ENCODE measurements at regions of chr15 and their contacts with region 1.

Region 1: DNA sequence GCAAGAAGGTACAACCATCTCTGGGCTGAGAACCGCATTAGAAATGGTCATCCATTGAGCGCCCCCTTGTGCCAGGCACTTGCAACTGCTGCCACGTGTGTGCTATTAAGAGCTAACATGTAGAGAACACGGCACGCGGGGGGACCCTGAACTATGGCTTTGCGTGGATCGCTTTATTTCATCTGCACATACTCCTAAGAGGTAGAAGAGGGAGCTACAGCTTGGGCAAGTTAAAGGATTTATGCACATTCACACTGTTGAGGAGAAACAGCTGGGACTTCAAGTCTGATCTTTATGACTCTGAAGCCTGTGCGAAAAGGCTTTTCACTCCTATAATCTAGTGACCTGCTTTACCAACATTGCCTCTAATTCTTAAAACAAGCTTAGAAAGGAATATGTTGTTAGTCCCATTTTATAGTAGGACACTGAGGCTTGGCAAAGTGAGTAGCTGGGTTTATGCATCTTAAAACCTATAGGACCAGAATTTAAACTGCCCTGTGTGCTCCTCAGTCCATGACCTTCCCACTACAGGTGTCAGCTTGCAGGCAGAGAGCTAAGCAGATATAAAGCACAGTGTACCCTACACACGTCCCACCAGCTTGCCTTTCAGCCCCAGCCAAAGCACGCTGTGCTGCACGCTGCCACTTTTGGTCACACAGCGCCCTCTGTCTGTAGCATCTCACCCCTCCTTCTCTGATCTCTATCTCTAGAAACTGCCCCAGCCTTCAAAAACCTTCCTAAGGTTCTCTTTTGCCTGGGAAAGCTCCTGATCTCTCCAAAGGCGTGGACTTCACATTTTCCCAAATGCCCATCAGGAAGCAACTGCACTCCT is 57.8 kb downstream of the STARD5 start:
- DNase-seq: peak; percentile 86
- H3K4me3 ChIP-seq: peak overlapping the region in 1 of 4 donors; percentile 6
- H3K27ac ChIP-seq: no peak overlapping the region
- H3K4me1 ChIP-seq: peaks cover 4 to 11% (median 7%) of the 10 kb centered on the region in 4 donors
- H3K27me3 ChIP-seq: peaks cover 5% of the 10 kb centered on the region
- CTCF ChIP-seq: peak; percentile 76 to 94 (median 86)
- EP300 ChIP-seq: no peak
- POLR2A ChIP-seq: no peak

Region 2: GRCh38 chr15:80970018-80970658 is 296.0 kb before region 1 on chr15:
- in situ Hi-C with region 1: loop called in 3 of 4 experiments (anchors 10 to 25 kb)
- intact Hi-C with region 1: loop called (anchors 5 kb)
- DNase-seq: peak; percentile 58
- H3K4me3 ChIP-seq: no peak overlapping the region
- H3K27ac ChIP-seq: no peak overlapping the region
- H3K4me1 ChIP-seq: no peaks in the 10 kb centered on the region
- H3K27me3 ChIP-seq: no peaks in the 10 kb centered on the region
- CTCF ChIP-seq: peak; percentile 83 to 92 (median 87)
- EP300 ChIP-seq: no peak
- POLR2A ChIP-seq: no peak

Region 3: GRCh38 chr15:80989518-80990478 is 276.4 kb before region 1 on chr15 and contains the start of gene MESD:
- in situ Hi-C with region 1: loop called in 2 of 4 experiments (anchors 10 to 25 kb)
- intact Hi-C with region 1: no loop called
- DNase-seq: peak; percentile 99
- H3K4me3 ChIP-seq: peak within 1 kb of the TSS; percentile 67 to 88 (median 82)
- H3K27ac ChIP-seq: peak within 1 kb of the TSS; percentile 87 to 89 (median 88)
- H3K4me1 ChIP-seq: peaks cover 8 to 39% (median 23%) of the 10 kb centered on the region in 4 donors
- H3K27me3 ChIP-seq: no peaks in the 10 kb centered on the region
- CTCF ChIP-seq: no peak
- EP300 ChIP-seq: no peak
- POLR2A ChIP-seq: peak; percentile 93
- total RNA-seq, gene MESD: 15.8 to 39.3 (median 19.2) TPM

Region 4: GRCh38 chr15:81155375-81156218 is 110.6 kb before region 1 on chr15:
- in situ Hi-C with region 1: loop called in 2 of 4 experiments (anchors 10 kb)
- intact Hi-C with region 1: loop called (anchors 5 kb)
- DNase-seq: peak; percentile 13
- H3K4me3 ChIP-seq: no peak overlapping the region
- H3K27ac ChIP-seq: no peak overlapping the region
- H3K4me1 ChIP-seq: peaks cover under 1 to 5% (median 4%) of the 10 kb centered on the region in 4 donors
- H3K27me3 ChIP-seq: no peaks in the 10 kb centered on the region
- CTCF ChIP-seq: peak; percentile 37 to 60 (median 46)
- EP300 ChIP-seq: no peak
- POLR2A ChIP-seq: no peak

Region 5: GRCh38 chr15:81400640-81401236 is 134.6 kb after region 1 on chr15:
- in situ Hi-C with region 1: loop called in 2 of 4 experiments (anchors 5 to 10 kb)
- intact Hi-C with region 1: loop called (anchors 5 kb)
- DNase-seq: no peak
- H3K4me3 ChIP-seq: no peak overlapping the region
- H3K27ac ChIP-seq: no peak overlapping the region
- H3K4me1 ChIP-seq: peaks cover 0 to 21% (median 0%) of the 10 kb centered on the region in 4 donors
- H3K27me3 ChIP-seq: peaks cover 4% of the 10 kb centered on the region
- CTCF ChIP-seq: peak; percentile 76 to 87 (median 84)
- EP300 ChIP-seq: no peak
- POLR2A ChIP-seq: no peak